ENCODE measurements at regions of chr18 and their contacts with region 1.

Region 1: DNA sequence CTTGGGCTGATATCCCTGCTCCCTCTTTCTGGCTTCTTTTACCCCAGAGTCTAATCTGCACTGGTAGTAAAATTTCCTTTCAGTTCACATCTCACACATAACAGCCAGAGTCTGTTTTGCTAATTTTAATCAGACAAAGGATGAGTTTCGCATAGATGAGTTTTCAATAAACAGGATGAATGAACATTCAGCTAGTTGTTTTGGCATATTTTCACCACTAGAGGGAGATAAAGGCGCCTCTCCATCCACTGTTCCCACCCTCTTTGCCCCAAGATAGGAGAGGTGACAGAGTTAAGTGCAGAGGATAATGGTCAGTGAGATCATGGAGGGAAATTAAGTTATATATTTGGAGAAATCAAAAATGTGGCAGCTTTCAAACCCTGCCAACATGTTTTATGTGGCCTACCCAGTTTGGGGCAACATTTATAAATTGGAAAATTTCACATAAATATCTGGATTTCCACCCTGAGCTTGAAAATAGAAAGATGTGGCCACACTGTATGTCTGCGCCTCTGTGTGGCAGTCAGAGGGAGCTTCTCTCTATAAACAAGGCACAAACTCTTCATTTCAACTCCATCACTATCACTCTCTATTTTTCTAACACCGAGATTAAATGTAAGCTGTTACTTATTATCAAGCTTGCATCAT is 48.5 kb upstream of the DTNA start:
- DNase-seq: no peak
- H3K4me3 ChIP-seq: no peak overlapping the region
- H3K27ac ChIP-seq: peak overlapping the region; percentile 73 to 77 (median 76)
- H3K4me1 ChIP-seq: peaks cover 35 to 55% (median 41%) of the 10 kb centered on the region in 4 donors
- H3K27me3 ChIP-seq: no peaks in the 10 kb centered on the region
- CTCF ChIP-seq: peak; percentile 64 to 78 (median 65)
- EP300 ChIP-seq: no peak
- POLR2A ChIP-seq: no peak

Region 2: GRCh38 chr18:34493099-34493544 is 168.5 kb before region 1 on chr18:
- intact Hi-C with region 1: loop called (anchors 10 kb)
- DNase-seq: no peak
- H3K4me3 ChIP-seq: peak overlapping the region; percentile 63 to 80 (median 72)
- H3K27ac ChIP-seq: peak overlapping the region; percentile 85 to 89 (median 86)
- H3K4me1 ChIP-seq: peaks cover 6 to 20% (median 17%) of the 10 kb centered on the region in 4 donors
- H3K27me3 ChIP-seq: peaks cover 0 to 3% (median 0%) of the 10 kb centered on the region in 4 donors
- CTCF ChIP-seq: no peak
- EP300 ChIP-seq: no peak
- POLR2A ChIP-seq: no peak

Region 3: GRCh38 chr18:34707670-34708069 is 46.1 kb after region 1 on chr18:
- intact Hi-C with region 1: loop called (anchors 5 kb)
- DNase-seq: no peak
- H3K4me3 ChIP-seq: peak overlapping the region in 3 of 4 donors; percentile 9 to 11 (median 10)
- H3K27ac ChIP-seq: peak overlapping the region; percentile 81 to 84 (median 82)
- H3K4me1 ChIP-seq: peaks cover 34 to 59% (median 54%) of the 10 kb centered on the region in 4 donors
- H3K27me3 ChIP-seq: no peaks in the 10 kb centered on the region
- CTCF ChIP-seq: no peak
- EP300 ChIP-seq: no peak
- POLR2A ChIP-seq: no peak

Region 4: DNA sequence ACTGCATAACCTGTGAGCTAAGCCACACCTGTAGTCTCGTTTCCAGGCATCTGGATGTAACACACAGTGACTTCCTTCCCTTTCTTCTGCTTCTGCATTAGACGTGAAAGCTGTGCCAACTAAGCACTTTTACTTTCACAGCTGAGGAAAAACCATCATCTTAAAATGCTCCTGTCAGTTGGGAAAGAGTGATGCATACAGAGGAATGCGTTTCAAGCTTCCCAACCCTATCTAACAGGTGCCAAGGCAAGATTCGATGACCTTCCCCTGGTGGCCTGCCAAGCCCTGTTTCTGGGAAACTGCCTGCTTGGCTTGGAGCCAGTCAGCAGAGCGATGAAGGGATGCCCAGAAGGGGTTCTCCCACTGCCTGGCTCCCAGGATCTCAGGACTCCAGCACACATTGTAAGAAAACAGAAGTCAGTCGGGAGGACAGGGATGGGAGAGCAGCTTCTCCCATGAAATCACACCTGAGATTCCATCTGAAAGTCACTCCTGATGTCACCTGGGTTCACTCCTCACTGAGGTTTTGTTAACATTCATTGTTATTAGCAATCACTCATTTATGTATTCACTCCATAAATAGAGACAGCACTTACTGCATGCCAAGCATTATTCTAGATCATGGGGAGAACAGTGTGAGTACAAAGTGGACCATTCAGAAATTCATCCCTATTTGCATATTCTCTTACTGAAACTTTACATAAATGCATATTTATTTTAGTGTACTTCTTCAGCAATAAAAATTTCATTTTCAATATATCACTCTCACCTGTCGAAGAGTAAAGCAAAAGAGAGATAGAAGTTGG is 112.6 kb after region 1 on chr18:
- intact Hi-C with region 1: loop called (anchors 5 kb)
- DNase-seq: no peak
- H3K4me3 ChIP-seq: peak overlapping the region in 3 of 4 donors; percentile 1 to 30 (median 6)
- H3K27ac ChIP-seq: peak overlapping the region; percentile 59 to 76 (median 68)
- H3K4me1 ChIP-seq: peaks cover 22 to 34% (median 24%) of the 10 kb centered on the region in 4 donors
- H3K27me3 ChIP-seq: no peaks in the 10 kb centered on the region
- CTCF ChIP-seq: no peak
- EP300 ChIP-seq: no peak
- POLR2A ChIP-seq: no peak

Region 5: GRCh38 chr18:34821749-34822148 is 160.2 kb after region 1 on chr18:
- intact Hi-C with region 1: no loop called
- DNase-seq: no peak
- H3K4me3 ChIP-seq: no peak overlapping the region
- H3K27ac ChIP-seq: no peak overlapping the region
- H3K4me1 ChIP-seq: peaks cover 0 to 15% (median 15%) of the 10 kb centered on the region in 4 donors
- H3K27me3 ChIP-seq: no peaks in the 10 kb centered on the region
- CTCF ChIP-seq: peak in 1 of 3 experiments; percentile 15
- EP300 ChIP-seq: no peak
- POLR2A ChIP-seq: no peak

Region 6: DNA sequence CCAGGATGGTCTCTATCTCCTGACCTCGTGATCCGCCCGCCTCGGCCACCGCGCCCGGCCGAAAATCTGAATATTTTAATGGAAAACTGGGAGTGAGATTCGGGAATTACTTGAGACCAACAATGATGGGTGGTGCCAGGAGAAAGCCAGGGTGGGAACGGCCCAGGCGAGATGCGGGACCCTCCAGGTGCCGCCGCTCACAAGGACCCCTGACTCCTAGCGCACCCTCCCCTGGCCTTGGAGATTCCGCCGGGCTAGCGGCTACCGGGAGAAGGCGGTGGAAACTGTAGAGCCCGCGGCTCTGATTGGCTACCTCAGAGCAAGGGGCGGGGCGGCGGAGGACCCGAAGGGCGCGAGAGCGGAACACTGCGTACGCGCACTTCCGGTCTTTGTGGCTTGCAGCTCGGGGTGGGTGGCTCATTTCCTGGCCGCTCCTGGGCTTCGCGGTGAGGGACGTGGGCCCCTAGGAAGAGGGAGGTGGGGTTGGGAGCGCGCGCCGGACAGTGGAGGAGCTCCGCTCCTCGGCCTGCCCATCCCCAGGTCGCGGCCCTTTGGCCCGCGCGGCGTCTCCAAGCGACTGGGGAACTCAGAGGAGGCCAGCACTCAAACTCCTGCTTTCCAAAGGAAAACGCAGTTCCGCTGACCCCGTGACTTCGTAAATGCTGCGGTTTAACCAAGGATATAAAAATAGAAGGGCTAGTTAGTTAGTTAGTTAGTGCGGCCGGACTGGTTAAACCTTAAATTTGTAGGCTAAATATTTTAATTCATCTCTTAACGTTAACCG is 579.3 kb after region 1 on chr18 and contains the start of gene ZNF397:
- intact Hi-C with region 1: no loop called
- DNase-seq: peak; percentile 99
- H3K4me3 ChIP-seq: peak within 1 kb of the TSS; percentile 72 to 79 (median 75)
- H3K27ac ChIP-seq: peak within 1 kb of the TSS; percentile 89 to 99 (median 94)
- H3K4me1 ChIP-seq: peaks cover 10 to 24% (median 22%) of the 10 kb centered on the region in 4 donors
- H3K27me3 ChIP-seq: no peaks in the 10 kb centered on the region
- CTCF ChIP-seq: no peak
- EP300 ChIP-seq: no peak
- POLR2A ChIP-seq: peak; percentile 93
- total RNA-seq, gene ZNF397: 22.2 to 27.8 (median 24.9) TPM

Measured in esophagus muscularis mucosa (tissue), 4 donors.